ENCODE measurements at regions of chr4 and their contacts with region 1.

Region 1: DNA sequence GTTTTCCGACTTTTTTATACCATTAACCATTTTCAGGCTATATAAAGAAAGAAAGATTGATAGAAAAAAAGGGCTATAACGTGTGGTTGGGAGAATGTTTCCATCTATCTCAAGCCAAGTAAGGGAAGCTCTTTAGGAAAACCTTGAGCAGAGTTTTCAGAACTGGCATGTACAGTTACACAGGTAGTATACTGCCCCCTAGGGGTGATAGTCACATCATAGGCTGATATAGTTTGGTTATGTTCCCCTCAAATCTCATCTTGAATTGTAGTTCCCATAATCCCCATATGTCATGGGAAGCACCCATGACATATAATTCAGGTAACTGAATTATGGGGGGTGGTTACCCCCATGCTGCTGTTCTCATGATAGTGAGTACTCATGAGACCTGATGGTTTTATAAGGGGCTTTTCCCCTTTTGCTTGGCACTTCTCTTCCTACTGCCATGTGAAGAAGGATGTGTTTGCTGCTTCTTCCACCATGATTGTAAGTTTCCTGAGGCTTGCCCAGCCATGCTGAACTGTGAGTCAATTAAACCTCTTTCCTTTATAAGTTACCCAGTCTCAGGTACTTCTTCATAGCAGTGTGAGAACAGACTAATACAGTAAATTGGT is 186.8 kb downstream of the TMA16 start:
- DNase-seq: peak; percentile 46
- ATAC-seq: peak; percentile 83
- H3K4me3 Mint-ChIP-seq: no peak overlapping the region
- H3K27ac Mint-ChIP-seq: no peak overlapping the region
- H3K4me1 Mint-ChIP-seq: no peaks in the 10 kb centered on the region
- H3K27me3 Mint-ChIP-seq: peaks cover 4% of the 10 kb centered on the region

Region 2: GRCh38 chr4:163554870-163555465 is 126.3 kb before region 1 on chr4:
- CTCF ChIA-PET with region 1: interaction called, 35 read pairs
- POLR2A ChIA-PET with region 1: interaction called, 3 read pairs
- DNase-seq: no peak
- ATAC-seq: no peak
- H3K4me3 Mint-ChIP-seq: no peak overlapping the region
- H3K27ac Mint-ChIP-seq: no peak overlapping the region
- H3K4me1 Mint-ChIP-seq: peaks cover 22% of the 10 kb centered on the region
- H3K27me3 Mint-ChIP-seq: peaks cover 2% of the 10 kb centered on the region

Region 3: GRCh38 chr4:163744861-163745260 is 63.5 kb after region 1 on chr4:
- CTCF ChIA-PET with region 1: no interaction called
- POLR2A ChIA-PET with region 1: no interaction called
- DNase-seq: no peak
- ATAC-seq: no peak
- H3K4me3 Mint-ChIP-seq: no peak overlapping the region
- H3K27ac Mint-ChIP-seq: no peak overlapping the region
- H3K4me1 Mint-ChIP-seq: no peaks in the 10 kb centered on the region
- H3K27me3 Mint-ChIP-seq: no peaks in the 10 kb centered on the region

Region 4: DNA sequence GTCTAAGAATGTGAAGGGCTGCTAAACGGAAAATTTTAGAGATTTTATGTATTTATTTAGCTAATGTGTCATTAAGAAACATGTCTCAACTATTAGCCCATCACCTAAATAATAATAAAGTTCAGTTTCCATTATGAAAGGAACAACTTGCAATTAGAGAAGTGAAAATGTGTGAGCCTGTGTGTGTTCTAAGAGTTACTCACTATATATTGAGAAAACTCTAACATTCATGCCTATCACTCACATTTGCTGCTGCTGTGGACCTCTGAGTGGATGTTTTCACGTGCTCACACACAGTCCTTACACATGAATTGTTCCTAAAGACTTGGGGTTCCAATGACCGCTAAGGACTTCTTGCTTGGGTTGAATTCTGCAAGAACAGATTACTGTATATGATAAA is 177.2 kb after region 1 on chr4:
- CTCF ChIA-PET with region 1: no interaction called
- POLR2A ChIA-PET with region 1: no interaction called
- DNase-seq: no peak
- ATAC-seq: no peak
- H3K4me3 Mint-ChIP-seq: no peak overlapping the region
- H3K27ac Mint-ChIP-seq: no peak overlapping the region
- H3K4me1 Mint-ChIP-seq: no peaks in the 10 kb centered on the region
- H3K27me3 Mint-ChIP-seq: no peaks in the 10 kb centered on the region

Region 5: DNA sequence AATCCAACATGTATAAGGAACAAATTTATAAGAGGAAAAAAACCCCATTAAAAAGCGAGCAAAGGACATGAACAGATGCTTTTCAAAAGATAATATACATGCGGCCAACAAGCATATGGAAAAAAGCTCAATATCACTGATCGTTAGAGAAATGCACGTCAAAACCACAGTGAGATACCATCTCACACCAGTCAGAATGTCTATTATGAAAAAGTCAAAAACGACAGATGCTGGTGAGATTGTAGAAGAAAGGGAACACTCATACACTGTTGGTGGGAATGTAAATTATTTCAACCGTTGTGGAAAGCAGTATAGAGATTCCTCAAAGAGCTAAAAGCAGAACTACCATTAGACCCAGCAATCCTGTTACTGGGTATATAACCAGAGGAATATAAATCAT is 278.6 kb after region 1 on chr4:
- CTCF ChIA-PET with region 1: no interaction called
- POLR2A ChIA-PET with region 1: no interaction called
- DNase-seq: no peak
- ATAC-seq: no peak
- H3K4me3 Mint-ChIP-seq: no peak overlapping the region
- H3K27ac Mint-ChIP-seq: no peak overlapping the region
- H3K4me1 Mint-ChIP-seq: no peaks in the 10 kb centered on the region
- H3K27me3 Mint-ChIP-seq: no peaks in the 10 kb centered on the region

Region 6: GRCh38 chr4:164009435-164009834 is 328.1 kb after region 1 on chr4:
- CTCF ChIA-PET with region 1: no interaction called
- POLR2A ChIA-PET with region 1: no interaction called
- DNase-seq: no peak
- ATAC-seq: no peak
- H3K4me3 Mint-ChIP-seq: no peak overlapping the region
- H3K27ac Mint-ChIP-seq: no peak overlapping the region
- H3K4me1 Mint-ChIP-seq: no peaks in the 10 kb centered on the region
- H3K27me3 Mint-ChIP-seq: no peaks in the 10 kb centered on the region